Activated B cell treated with CpG ODN at 0.5 μM for 24 hours (primary cell): ENCODE measurements at regions of chr9 and their contacts with region 1.

Region 1: GRCh38 chr9:91291866-91292265 is 69.9 kb downstream of the AUH start:
- DNase-seq: no peak
- ATAC-seq: no peak
- H3K4me3 Mint-ChIP-seq: no peak overlapping the region
- H3K27ac Mint-ChIP-seq: no peak overlapping the region
- H3K4me1 Mint-ChIP-seq: peaks cover 18% of the 10 kb centered on the region
- H3K27me3 Mint-ChIP-seq: no peaks in the 10 kb centered on the region
- CTCF ChIP-seq: no peak

Region 2: DNA sequence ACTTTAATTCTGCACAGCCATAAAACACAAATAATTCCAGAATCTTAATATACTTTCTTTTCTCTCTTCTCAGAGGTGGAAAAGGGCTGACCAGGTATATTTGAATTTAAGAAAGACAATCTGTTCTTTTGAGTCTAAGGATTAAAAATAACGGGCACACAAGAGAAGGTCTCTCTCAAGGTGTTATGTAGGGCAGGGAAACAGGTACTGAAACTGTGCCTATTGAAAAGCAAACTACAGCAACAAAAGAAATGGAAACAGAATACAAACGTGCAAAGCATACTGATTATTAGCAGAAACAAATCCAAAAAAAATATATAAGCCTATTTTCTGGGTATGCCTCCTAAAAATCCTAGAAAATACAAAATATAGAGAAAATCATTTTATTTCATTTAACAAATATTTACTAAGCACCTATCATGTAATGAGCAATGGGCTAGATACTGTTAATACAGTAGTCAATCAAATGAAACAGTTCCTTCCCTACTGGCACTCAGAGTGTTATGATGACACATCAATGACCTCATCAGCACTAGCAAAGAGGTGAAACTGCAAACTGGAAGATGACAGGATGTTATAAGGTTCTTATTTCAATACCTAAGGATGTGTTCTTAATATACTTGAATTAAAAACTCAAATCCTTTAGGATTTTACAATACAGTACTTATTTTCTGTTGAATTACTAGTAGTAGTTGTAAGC is 17.9 kb before region 1 on chr9:
- CTCF ChIA-PET with region 1: no interaction called
- POLR2A ChIA-PET with region 1: interaction called, 11 read pairs
- intact Hi-C with region 1: no loop called
- DNase-seq: no peak
- ATAC-seq: peak; percentile 56
- H3K4me3 Mint-ChIP-seq: no peak overlapping the region
- H3K27ac Mint-ChIP-seq: no peak overlapping the region
- H3K4me1 Mint-ChIP-seq: peaks cover 9% of the 10 kb centered on the region
- H3K27me3 Mint-ChIP-seq: no peaks in the 10 kb centered on the region
- CTCF ChIP-seq: no peak

Region 3: DNA sequence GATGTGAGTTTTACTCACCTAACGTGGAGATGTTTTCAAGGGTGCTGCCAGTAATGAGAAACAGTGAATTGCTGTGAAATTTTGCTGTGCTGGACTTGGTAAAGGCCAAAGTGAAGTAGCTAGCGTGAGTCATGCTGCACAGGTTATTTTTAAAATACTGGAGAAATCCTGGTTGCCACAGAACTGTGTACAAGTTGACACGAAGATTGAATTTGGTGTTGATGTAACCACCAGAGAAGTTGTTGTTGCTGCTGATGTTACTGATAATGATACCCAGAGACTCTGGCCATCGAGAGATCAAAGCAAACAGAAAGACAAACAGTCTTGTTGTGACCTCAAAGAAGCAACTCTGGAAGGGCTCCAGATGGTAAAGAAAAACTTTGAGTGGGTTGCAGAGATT is 319.8 kb after region 1 on chr9:
- CTCF ChIA-PET with region 1: no interaction called
- POLR2A ChIA-PET with region 1: no interaction called
- intact Hi-C with region 1: no loop called
- DNase-seq: no peak
- ATAC-seq: no peak
- H3K4me3 Mint-ChIP-seq: no peak overlapping the region
- H3K27ac Mint-ChIP-seq: no peak overlapping the region
- H3K4me1 Mint-ChIP-seq: no peaks in the 10 kb centered on the region
- H3K27me3 Mint-ChIP-seq: peaks cover 3% of the 10 kb centered on the region
- CTCF ChIP-seq: no peak